Heart left ventricle (tissue), 16 donors: ENCODE measurements at regions of chr1 and their contacts with region 1.

Region 1: DNA sequence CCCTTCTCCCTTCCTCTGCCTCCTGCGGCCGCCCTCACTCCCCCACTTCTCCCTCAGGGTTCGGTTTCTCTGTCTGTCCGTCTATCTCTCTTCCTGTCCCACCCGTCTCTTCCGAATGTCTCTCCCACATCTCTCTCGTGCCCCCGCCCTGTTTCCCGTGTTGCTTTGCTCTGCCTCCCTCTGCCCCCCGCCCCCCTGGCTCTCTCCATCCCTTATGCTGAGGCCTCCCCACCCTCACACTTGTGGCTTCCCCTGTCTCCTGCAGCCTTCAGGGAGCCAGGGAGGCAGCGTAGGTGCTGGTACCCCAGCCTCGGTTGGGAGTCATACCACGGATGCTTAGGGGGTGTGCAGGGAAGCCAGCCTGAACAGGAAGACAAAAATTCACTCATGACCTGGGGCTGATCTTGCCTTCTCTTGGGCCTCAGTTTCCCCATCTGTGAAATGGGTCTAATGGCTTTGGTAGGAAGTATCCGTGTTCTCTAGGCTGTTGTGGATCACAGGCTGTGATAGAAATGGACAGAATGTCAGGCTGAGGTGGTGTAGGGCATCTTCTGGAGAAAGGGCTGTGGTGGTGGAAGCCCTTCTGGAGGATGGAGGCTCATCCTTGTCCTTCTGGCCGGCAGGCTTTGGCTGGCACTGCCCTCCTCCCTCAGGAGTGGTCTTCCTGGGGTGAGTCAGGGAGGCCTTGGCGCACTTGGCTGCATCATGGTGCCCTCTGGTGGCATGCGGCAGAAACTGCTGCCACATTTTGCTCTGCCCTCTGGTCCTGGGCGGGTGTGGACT is 55.5 kb downstream of the FOXO6 start:
- DNase-seq: peak; percentile 50 to 82 (median 62)
- ATAC-seq: peak; percentile 35 to 65 (median 58)
- H3K4me3 ChIP-seq: no peak overlapping the region
- H3K27ac ChIP-seq: no peak overlapping the region
- H3K4me1 ChIP-seq: peaks cover 0 to 27% (median 15%) of the 10 kb centered on the region in 12 donors
- H3K27me3 ChIP-seq: no peaks in the 10 kb centered on the region
- CTCF ChIP-seq: peak; percentile 84 to 95 (median 92)
- POLR2A ChIP-seq: no peak

Region 2: DNA sequence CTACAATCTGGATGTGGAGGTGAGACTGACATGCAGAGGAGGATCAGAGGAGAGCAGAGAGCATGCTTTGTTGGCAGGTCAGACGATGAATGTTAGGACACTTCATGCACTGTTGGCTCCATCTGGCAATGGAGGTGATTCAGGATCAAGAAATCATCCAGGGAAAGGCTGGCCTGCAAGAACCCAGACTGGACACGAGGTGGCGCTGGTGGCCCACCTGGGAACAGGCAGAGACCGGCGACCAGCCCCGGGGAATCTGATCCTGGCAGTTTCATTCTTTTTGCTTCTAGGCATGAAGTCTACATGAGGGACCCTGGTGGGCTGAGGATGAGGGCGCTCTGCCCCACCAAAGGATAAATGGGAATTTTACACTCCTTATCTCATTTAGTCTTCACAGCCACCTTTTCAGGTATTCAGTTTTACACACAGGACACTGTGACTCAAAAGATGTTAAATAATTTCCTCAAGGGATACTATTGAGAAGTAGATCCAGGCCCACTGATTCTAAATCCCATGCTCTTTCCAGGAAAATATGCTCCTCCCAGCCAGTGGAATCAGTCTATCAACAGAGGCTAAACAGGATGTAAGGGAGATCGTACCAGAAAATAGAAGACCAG is 148.5 kb before region 1 on chr1:
- intact Hi-C with region 1: loop called in 8 of 10 experiments (anchors 1 to 5 kb)
- DNase-seq: peak; percentile 69 to 84 (median 73)
- ATAC-seq: peak; percentile 42 to 85 (median 76)
- H3K4me3 ChIP-seq: no peak overlapping the region
- H3K27ac ChIP-seq: no peak overlapping the region
- H3K4me1 ChIP-seq: peaks cover 0 to 5% (median 0%) of the 10 kb centered on the region in 12 donors
- H3K27me3 ChIP-seq: no peaks in the 10 kb centered on the region
- CTCF ChIP-seq: peak; percentile 94 to 99 (median 98)
- POLR2A ChIP-seq: no peak

Region 3: DNA sequence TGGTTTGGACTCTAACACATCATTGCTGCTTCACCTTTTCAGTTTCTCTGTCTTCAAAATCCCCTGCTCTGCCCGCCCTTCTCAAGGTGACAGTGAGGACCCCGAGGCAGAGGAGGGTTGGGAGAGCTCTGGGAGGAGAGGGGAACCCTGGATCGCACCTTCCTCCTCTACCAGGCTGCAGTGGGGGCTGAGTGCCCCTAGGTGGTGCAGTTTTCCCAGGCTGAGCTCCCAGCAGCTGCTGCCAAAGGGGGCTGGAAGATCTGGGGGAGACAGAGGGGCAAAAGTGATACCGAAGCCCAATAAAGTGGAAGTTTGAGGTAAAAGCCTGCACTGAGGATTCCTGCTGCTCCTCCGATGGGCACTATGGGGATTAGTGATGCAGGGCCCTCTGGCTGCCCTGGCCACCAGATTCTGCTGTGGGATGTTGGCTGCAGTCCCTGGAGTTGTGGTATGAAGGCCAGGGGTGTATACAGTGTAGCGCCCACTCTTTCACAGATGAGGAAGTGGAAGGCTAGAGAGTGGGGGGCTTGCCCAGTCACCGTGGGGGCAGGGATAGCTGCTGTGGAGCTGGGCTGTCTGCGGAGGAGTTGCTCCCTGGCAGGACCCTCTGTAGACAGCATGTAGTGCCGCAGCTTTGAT is 133.9 kb before region 1 on chr1:
- intact Hi-C with region 1: loop called in 9 of 10 experiments (anchors 2 to 5 kb)
- DNase-seq: peak in 1 of 5 donors; percentile 34
- ATAC-seq: peak; percentile 12 to 82 (median 68)
- H3K4me3 ChIP-seq: no peak overlapping the region
- H3K27ac ChIP-seq: no peak overlapping the region
- H3K4me1 ChIP-seq: peaks cover 0 to 16% (median 3%) of the 10 kb centered on the region in 12 donors
- H3K27me3 ChIP-seq: peaks cover 0 to 8% (median 0%) of the 10 kb centered on the region in 9 donors
- CTCF ChIP-seq: peak; percentile 57 to 86 (median 76)
- POLR2A ChIP-seq: no peak

Region 4: GRCh38 chr1:41322835-41323627 is 93.7 kb before region 1 on chr1:
- intact Hi-C with region 1: loop called (anchors 1 to 10 kb)
- DNase-seq: peak in 3 of 5 donors; percentile 41 to 68 (median 67)
- ATAC-seq: peak; percentile 64 to 75 (median 74)
- H3K4me3 ChIP-seq: no peak overlapping the region
- H3K27ac ChIP-seq: no peak overlapping the region
- H3K4me1 ChIP-seq: peaks cover 0 to 19% (median 13%) of the 10 kb centered on the region in 12 donors
- H3K27me3 ChIP-seq: no peaks in the 10 kb centered on the region
- CTCF ChIP-seq: peak; percentile 38 to 63 (median 50)
- POLR2A ChIP-seq: no peak

Region 5: DNA sequence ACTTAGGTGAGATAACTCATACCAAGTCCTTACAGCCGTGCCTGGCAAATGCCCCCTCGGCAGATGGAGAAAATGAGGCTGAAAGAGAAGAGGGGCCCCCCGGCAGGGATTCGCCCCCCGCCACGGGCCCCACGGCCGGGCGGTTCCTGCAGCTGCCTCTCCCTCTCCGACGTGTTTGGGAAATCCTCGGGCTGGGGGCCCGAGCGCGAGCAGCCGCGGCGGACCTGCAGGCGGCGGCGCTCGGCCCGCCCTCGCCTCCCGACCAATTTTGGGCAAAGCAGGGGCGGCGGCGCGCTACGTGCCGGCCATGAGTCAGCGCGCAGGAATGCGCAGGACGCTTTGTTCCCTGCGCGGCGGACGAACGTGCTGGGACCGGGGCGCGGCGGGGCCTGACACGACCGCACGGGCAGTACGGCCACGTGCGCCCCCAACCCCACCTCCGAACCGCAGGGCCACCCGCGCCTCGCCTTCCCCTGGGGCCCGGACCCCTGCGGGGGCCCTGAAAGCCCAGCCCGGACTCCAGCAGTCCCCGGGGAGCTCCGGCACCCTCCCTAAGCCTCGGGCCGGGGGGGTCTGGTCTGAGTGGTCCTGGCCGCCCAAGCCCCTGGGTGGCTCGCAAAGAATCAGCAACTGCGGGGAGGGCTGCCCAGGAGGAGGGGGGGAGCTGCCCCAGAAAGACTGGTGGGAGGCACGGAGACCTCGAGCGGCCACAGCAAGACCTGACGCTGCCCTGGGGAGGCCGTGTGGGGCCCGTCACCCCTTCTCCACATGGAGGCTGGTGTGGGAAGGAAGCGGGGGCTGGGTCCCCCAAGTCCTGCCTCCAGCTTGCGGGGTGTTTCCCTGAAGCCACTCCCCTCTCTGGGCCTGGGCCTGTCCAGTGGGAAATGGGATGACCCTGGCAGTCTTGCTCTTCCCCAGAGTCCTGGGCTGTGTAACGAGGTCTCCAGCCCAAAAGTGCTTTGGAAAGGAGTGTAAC is 79.6 kb after region 1 on chr1:
- intact Hi-C with region 1: no loop called
- DNase-seq: peak; percentile 86 to 95 (median 91)
- ATAC-seq: peak; percentile 60 to 81 (median 78)
- H3K4me3 ChIP-seq: peak overlapping the region in 11 of 12 donors; percentile 7 to 57 (median 45)
- H3K27ac ChIP-seq: peak overlapping the region; percentile 73 to 96 (median 91)
- H3K4me1 ChIP-seq: peaks cover 4 to 63% (median 38%) of the 10 kb centered on the region in 12 donors
- H3K27me3 ChIP-seq: peaks cover 0 to 11% (median 0%) of the 10 kb centered on the region in 9 donors
- CTCF ChIP-seq: peak in 6 of 12 donors; percentile 4 to 44 (median 26)
- POLR2A ChIP-seq: peak in 1 of 2 donors; percentile 69